ENCODE measurements at regions of chr11 and their contacts with region 1.

Region 1: DNA sequence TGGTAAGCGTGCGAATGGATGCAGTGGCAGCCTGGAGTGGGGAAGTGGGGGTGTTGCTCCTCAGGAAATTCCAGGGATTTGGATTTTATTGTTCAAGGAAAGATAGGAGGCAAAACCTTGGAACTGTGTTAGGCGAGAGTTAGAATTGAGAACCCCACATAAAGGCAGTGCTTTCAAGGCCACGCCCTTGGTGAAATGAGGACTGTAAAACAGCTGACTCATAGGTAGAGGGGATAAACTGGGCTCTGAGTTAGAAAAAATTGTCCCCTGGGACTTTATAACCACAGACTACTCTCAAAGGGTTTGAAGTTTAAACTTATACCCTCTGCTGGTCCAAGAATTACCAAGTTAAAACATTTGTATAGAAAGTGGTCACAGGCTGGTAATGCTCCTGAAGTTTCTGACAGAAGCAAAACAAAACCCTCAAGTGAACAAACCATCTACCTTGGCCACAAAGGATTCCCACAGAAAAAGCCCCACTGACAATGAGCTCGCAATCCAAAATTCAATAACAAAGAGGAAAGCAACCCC is 250.3 kb upstream of the TBCEL start:
- DNase-seq: no peak
- H3K4me3 Mint-ChIP-seq: no peak overlapping the region
- H3K27ac Mint-ChIP-seq: no peak overlapping the region
- H3K4me1 Mint-ChIP-seq: no peaks in the 10 kb centered on the region
- H3K27me3 Mint-ChIP-seq: peaks cover 80% of the 10 kb centered on the region
- CTCF ChIP-seq: no peak

Region 2: GRCh38 chr11:121180183-121180582 is 406.6 kb after region 1 on chr11:
- CTCF ChIA-PET with region 1: interaction called, 12 read pairs
- intact Hi-C with region 1: no loop called
- DNase-seq: no peak
- H3K4me3 Mint-ChIP-seq: no peak overlapping the region
- H3K27ac Mint-ChIP-seq: no peak overlapping the region
- H3K4me1 Mint-ChIP-seq: no peaks in the 10 kb centered on the region
- H3K27me3 Mint-ChIP-seq: no peaks in the 10 kb centered on the region
- CTCF ChIP-seq: no peak

Measured in Calu3 (cell line).